Activated CD4-positive, alpha-beta T cell treated with anti-CD3 and anti-CD28 coated beads, Interleukin-2, amount 10 ng/mL, durations not matched to agents 24 days and 14 days (primary cell): ENCODE measurements at regions of chr6 and their contacts with region 1.

Region 1: DNA sequence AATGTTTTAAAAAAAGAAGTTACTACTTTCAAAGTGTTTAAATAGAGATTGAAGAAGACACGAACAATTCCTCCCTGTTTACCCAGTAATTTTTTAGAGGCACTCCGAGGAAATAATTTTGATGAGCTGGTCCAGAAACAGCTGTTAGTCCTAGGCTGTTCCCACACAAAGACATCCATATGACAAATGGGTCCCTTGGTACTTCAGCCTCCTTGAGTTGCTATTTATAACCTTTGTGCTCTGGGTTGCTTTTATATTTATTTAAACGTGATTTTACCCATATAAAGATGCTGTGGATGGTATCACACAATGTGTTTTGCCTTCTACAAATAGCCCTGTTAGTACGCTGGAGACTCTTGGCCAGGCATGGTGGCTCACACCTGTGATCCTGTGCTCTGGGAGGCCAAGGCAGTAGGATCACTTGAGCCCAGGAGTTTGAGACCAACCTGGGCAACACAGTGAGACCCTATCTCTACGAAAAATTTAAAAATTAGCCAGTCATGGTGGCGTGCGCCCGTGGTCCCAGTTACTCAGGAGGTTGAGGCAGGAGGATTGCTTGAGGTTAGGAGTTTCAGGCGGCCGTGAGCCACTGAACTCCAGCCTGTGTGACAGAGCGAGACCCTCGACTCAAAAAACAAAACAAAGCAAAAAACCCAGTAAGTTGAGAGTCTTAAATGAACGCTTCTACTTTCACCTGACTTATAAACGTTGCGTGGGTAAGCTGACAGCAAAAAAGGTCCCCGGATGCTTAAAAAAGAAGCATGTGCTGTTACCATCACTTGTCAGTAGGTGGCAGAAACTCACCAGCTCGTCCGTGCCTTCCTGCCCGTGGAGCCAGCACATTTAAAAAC is 56.9 kb upstream of the ARMH2 start:
- DNase-seq: peak; percentile 91
- H3K4me3 Mint-ChIP-seq: peak overlapping the region; percentile 32
- H3K27ac Mint-ChIP-seq: peak overlapping the region; percentile 91
- H3K4me1 Mint-ChIP-seq: peaks cover 49% of the 10 kb centered on the region
- H3K27me3 Mint-ChIP-seq: no peaks in the 10 kb centered on the region

Region 2: GRCh38 chr6:24910961-24911712 is 55.5 kb after region 1 on chr6:
- intact Hi-C with region 1: loop called (anchors 1 kb)
- DNase-seq: peak; percentile 82
- H3K4me3 Mint-ChIP-seq: peak overlapping the region; percentile 86
- H3K27ac Mint-ChIP-seq: peak overlapping the region; percentile 93
- H3K4me1 Mint-ChIP-seq: peaks cover 75% of the 10 kb centered on the region
- H3K27me3 Mint-ChIP-seq: no peaks in the 10 kb centered on the region

Region 3: DNA sequence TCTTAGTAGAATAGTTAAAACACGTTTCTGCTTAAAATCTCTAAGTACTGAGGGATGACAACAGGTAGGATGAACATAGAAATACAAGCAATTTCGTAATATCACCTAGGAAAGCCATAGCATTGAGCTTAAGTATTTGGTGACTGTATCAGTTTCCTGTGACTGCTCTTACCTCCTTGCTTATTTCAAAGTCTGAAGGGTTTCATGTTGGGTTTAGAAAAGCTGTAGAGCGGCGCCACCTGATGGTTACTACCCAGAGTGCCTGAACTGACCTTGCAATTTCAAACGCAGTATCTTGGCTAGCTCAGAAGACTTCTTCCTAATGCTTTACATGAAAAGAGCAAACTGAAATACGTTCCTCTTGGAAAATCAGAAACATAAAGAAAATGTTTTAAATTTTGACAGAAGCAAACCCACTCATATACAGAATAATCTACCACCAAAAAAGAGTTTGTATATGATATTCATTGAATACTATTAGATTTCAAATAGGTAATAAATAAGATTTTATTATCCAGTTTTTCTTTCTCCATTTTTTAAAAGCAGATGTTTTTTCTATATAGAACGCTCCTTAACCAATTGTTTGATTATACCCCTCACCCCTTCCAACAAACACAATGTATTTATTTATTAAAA is 162.4 kb after region 1 on chr6:
- intact Hi-C with region 1: loop called (anchors 1 kb)
- DNase-seq: peak; percentile 93
- H3K4me3 Mint-ChIP-seq: peak overlapping the region; percentile 31
- H3K27ac Mint-ChIP-seq: peak overlapping the region; percentile 84
- H3K4me1 Mint-ChIP-seq: peaks cover 33% of the 10 kb centered on the region
- H3K27me3 Mint-ChIP-seq: no peaks in the 10 kb centered on the region